Natural killer cell (primary cell): ENCODE measurements at regions of chr9 and their contacts with region 1.

Region 1: DNA sequence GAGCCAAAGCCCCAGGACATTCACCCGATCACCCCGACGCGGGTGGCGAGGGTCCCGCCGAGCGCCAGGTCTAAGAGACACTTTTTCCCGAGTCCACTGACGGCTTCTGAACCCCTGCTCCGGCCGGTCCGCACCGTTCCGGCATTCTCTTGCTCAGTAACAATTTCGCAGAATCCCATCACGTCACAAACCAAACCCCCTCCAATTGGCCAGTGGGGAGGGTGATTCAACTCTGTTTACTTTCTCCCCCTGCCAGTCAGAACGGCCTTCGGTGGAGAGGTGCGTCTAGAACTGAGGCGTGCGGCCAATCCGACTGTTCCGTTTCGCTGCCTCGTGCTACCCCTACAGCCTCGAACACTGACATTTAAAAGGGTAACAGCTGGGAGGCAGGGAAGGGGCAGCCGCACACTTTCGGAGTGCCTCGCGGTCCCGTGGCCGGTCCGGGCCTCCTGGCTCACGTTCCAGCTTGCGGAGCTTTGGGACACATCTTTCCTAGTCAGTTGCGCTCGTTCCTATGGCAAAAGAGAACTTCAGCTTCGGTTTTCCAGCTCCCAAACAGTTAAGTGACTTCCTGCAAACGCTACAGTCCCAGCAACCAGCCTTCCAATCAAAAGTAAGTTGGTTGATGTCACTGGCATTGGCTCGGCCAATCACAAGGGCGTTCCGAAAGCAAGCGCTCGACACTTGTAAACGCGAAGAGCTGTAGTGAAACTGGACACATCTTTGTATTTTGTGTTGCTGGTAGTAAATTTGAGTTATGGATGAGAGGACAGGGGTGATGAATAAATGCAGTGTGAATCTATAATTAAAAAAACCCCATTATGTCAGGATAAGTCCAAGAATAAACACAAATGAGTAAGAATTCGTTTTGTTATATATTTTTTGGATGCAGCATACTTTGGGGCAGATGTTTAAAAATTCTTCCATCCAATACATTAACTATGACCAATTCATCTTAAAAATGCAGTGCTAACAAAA is at the start of gene KLF9:
- DNase-seq: peak; percentile 88 to 97
- ATAC-seq: peak; percentile 71 to 92 (median 82)
- H3K4me3 ChIP-seq: peak within 1 kb of the TSS; percentile 94
- H3K4me3 Mint-ChIP-seq: peak within 1 kb of the TSS; percentile 99
- H3K27ac ChIP-seq: peak within 1 kb of the TSS; percentile 95
- H3K27ac Mint-ChIP-seq: peak within 1 kb of the TSS; percentile 99 to 100
- H3K4me1 ChIP-seq: peaks cover 38% of the 10 kb centered on the region
- H3K4me1 Mint-ChIP-seq: peaks cover 44% of the 10 kb centered on the region in 2 donors
- H3K27me3 ChIP-seq: no peaks in the 10 kb centered on the region
- H3K27me3 Mint-ChIP-seq: no peaks in the 10 kb centered on the region
- CTCF ChIP-seq: no peak
- total RNA-seq, gene KLF9: 47.7 to 79.3 (median 51.2) TPM

Region 2: GRCh38 chr9:70258692-70259511 is 155.2 kb before region 1 on chr9 and contains the start of gene SMC5:
- intact Hi-C with region 1: loop called (anchors 2 kb)
- DNase-seq: peak; percentile 90 to 96
- ATAC-seq: peak; percentile 88 to 96 (median 91)
- H3K4me3 ChIP-seq: peak within 1 kb of the TSS; percentile 96
- H3K4me3 Mint-ChIP-seq: peak within 1 kb of the TSS; percentile 94
- H3K27ac ChIP-seq: peak within 1 kb of the TSS; percentile 96
- H3K27ac Mint-ChIP-seq: peak within 1 kb of the TSS; percentile 90 to 94
- H3K4me1 ChIP-seq: peaks cover 24% of the 10 kb centered on the region
- H3K4me1 Mint-ChIP-seq: peaks cover 42 to 46% of the 10 kb centered on the region in 2 donors
- H3K27me3 ChIP-seq: no peaks in the 10 kb centered on the region
- H3K27me3 Mint-ChIP-seq: no peaks in the 10 kb centered on the region
- CTCF ChIP-seq: no peak
- total RNA-seq, gene SMC5: 35.0 to 41.0 (median 40.9) TPM

Region 3: DNA sequence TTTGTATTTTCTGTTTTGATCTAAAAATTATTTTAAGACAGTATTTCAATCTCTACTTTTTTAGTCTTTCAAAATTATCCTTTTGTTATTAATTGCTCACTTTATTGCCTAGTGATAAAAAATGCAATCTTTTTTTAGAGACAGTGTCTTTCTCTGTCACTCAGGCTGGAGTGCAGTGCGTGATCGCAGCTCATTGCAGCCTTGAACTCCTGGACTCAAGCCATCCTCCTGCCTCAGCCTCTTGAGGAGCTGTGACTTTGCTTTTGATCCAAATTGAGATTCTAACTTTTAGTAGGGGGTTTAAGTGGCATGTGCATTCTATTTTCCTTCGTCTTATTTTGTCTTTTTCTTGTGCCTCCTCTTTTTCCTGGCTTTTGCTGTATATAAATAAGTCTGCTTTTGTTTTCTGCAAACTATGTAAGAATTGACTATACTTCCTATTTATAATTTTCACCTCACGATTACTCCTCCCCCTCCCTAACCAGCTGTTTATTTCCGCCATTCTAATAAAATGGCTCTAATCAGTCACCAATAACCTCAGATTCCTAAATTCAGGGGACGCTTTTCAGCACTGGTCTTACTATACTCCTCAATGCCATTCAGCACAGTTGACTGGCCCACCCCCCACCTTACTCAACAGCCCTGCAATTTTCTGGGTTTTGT is 31.9 kb before region 1 on chr9:
- intact Hi-C with region 1: no loop called
- DNase-seq: no peak
- ATAC-seq: no peak
- H3K4me3 ChIP-seq: no peak overlapping the region
- H3K4me3 Mint-ChIP-seq: no peak overlapping the region
- H3K27ac ChIP-seq: no peak overlapping the region
- H3K27ac Mint-ChIP-seq: no peak overlapping the region
- H3K4me1 ChIP-seq: no peaks in the 10 kb centered on the region
- H3K4me1 Mint-ChIP-seq: peaks cover 21 to 26% of the 10 kb centered on the region in 2 donors
- H3K27me3 ChIP-seq: no peaks in the 10 kb centered on the region
- H3K27me3 Mint-ChIP-seq: no peaks in the 10 kb centered on the region
- CTCF ChIP-seq: no peak

Region 4: DNA sequence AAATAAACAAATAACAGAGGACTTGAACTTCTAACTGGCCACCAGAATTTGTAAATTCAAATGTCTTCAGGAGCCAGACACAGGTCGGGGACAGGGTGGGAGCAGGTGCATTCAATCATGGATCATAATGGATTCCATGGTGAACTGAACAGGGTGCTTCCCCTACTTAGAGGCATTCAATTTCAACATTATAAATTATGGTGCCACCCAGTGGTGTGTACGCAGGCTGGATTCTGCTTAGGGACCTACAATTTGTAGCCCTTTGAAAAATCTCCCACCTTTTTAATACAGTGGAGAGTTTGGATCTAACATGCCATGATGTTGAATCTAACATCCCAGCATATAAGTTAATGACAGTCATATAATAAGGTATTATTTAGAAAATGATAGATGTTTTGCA is 21.9 kb before region 1 on chr9:
- intact Hi-C with region 1: loop called (anchors 2 kb)
- DNase-seq: peak in 1 of 2 donors; percentile 40
- ATAC-seq: peak; percentile 61 to 73 (median 67)
- H3K4me3 ChIP-seq: no peak overlapping the region
- H3K4me3 Mint-ChIP-seq: peak overlapping the region; percentile 68
- H3K27ac ChIP-seq: peak overlapping the region; percentile 47
- H3K27ac Mint-ChIP-seq: peak overlapping the region; percentile 84 to 86
- H3K4me1 ChIP-seq: peaks cover 25% of the 10 kb centered on the region
- H3K4me1 Mint-ChIP-seq: peaks cover 77% of the 10 kb centered on the region in 2 donors
- H3K27me3 ChIP-seq: no peaks in the 10 kb centered on the region
- H3K27me3 Mint-ChIP-seq: no peaks in the 10 kb centered on the region
- CTCF ChIP-seq: peak; percentile 19

Region 5: GRCh38 chr9:71768388-71769174 is 1354.5 kb after region 1 on chr9 and contains the start of gene CEMIP2:
- intact Hi-C with region 1: loop called (anchors 10 kb)
- DNase-seq: peak; percentile 86 to 93
- ATAC-seq: peak; percentile 82 to 95 (median 86)
- H3K4me3 ChIP-seq: peak within 1 kb of the TSS; percentile 88
- H3K4me3 Mint-ChIP-seq: peak within 1 kb of the TSS; percentile 92
- H3K27ac ChIP-seq: peak within 1 kb of the TSS; percentile 96
- H3K27ac Mint-ChIP-seq: peak within 1 kb of the TSS; percentile 88 to 94
- H3K4me1 ChIP-seq: peaks cover 29% of the 10 kb centered on the region
- H3K4me1 Mint-ChIP-seq: peaks cover 54 to 56% of the 10 kb centered on the region in 2 donors
- H3K27me3 ChIP-seq: no peaks in the 10 kb centered on the region
- H3K27me3 Mint-ChIP-seq: no peaks in the 10 kb centered on the region
- CTCF ChIP-seq: peak; percentile 62
- total RNA-seq, gene CEMIP2: 204 to 326 (median 230) TPM